WTC11 (cell line): ENCODE measurements at regions of chr10 and their contacts with region 1.

Region 1: DNA sequence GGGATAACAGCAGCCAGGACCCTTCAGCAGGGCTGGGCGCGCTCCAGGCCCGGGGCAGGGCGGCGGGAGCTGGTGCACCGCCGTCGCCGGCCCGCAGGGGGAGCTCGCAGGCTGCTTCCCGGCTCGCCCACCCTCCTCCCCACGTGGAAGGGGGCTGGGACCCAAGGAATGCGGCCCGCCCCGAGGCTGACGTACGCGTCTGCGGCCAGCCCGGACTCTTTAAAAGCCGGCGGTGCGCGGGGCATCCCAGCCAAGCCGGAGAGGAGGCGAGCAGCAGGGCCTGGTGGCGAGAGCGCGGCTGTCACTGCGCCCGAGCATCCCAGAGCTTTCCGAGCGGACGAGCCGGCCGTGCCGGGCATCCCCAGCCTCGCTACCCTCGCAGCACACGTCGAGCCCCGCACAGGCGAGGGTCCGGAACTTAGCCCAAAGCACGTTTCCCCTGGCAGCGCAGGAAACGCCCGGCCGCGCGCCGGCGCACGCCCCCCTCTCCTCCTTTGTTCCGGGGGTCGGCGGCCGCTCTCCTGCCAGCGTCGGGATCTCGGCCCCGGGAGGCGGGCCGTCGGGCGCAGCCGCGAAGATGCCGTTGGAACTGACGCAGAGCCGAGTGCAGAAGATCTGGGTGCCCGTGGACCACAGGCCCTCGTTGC is at the start of gene PFKFB3:
- DNase-seq: peak; percentile 97
- ATAC-seq: peak; percentile 80
- H3K4me3 Mint-ChIP-seq: peak within 1 kb of the TSS; percentile 97
- H3K27ac Mint-ChIP-seq: peak within 1 kb of the TSS; percentile 94
- H3K4me1 Mint-ChIP-seq: peaks cover 21% of the 10 kb centered on the region
- H3K27me3 Mint-ChIP-seq: peaks cover 53% of the 10 kb centered on the region
- CTCF ChIP-seq: peak; percentile 94
- total RNA-seq, gene PFKFB3: 30.6 to 42.5 TPM (median 40.7 TPM) in 3 replicates

Region 2: DNA sequence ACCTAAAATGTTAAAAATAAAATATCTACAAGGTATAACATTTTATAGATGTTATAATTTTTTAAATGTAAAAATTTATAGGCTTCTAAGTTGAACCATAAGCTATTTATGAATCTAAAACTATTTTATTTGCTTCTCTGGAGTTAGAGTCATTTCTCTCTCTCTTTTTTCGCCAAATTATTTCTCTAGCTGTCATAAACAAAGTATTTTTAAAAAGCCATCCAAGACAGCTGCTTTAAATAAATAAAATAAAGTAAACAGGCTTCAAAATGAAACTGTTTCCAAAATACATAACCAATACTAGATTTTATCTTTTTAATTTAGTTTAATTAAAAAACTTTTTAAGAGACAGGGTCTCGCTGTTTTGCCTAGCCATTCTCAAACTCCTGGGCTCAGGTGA is 213.1 kb before region 1 on chr10:
- CTCF ChIA-PET with region 1: no interaction called
- POLR2A ChIA-PET with region 1: no interaction called
- DNase-seq: no peak
- ATAC-seq: no peak
- H3K4me3 Mint-ChIP-seq: no peak overlapping the region
- H3K27ac Mint-ChIP-seq: no peak overlapping the region
- H3K4me1 Mint-ChIP-seq: no peaks in the 10 kb centered on the region
- H3K27me3 Mint-ChIP-seq: peaks cover 5% of the 10 kb centered on the region
- CTCF ChIP-seq: no peak

Region 3: DNA sequence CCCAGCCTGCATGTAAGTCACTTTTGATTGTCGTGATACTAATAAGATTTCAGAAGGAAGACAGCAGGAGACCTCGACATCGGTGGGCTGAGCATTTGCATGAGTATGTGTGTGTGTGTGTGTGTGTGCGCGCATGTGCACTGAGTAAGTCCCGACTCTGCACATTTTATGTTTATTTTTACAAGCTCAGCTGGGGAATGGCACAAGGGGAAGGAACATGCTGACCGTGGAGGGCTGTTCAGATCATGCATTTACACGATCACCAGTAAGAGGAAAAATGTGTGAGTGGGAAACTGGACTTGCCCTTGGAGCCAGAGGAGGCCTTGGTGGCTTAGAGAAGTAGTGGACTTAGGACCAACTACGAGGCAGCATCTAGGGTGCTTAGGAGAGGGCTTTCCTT is 182.0 kb before region 1 on chr10:
- CTCF ChIA-PET with region 1: no interaction called
- POLR2A ChIA-PET with region 1: no interaction called
- DNase-seq: no peak
- ATAC-seq: no peak
- H3K4me3 Mint-ChIP-seq: no peak overlapping the region
- H3K27ac Mint-ChIP-seq: no peak overlapping the region
- H3K4me1 Mint-ChIP-seq: no peaks in the 10 kb centered on the region
- H3K27me3 Mint-ChIP-seq: no peaks in the 10 kb centered on the region; the same call in 1 of the 2 replicates
- CTCF ChIP-seq: no peak

Region 4: GRCh38 chr10:6086375-6087233 is 116.2 kb before region 1 on chr10:
- CTCF ChIA-PET with region 1: interaction called, 19 read pairs
- POLR2A ChIA-PET with region 1: no interaction called
- DNase-seq: peak; percentile 92
- ATAC-seq: peak; percentile 68
- H3K4me3 Mint-ChIP-seq: no peak overlapping the region
- H3K27ac Mint-ChIP-seq: peak overlapping the region; percentile 76; the same call in 1 of the 2 replicates
- H3K4me1 Mint-ChIP-seq: peaks cover 38% of the 10 kb centered on the region
- H3K27me3 Mint-ChIP-seq: no peaks in the 10 kb centered on the region; the same call in 1 of the 2 replicates
- CTCF ChIP-seq: peak; percentile 55

Region 5: DNA sequence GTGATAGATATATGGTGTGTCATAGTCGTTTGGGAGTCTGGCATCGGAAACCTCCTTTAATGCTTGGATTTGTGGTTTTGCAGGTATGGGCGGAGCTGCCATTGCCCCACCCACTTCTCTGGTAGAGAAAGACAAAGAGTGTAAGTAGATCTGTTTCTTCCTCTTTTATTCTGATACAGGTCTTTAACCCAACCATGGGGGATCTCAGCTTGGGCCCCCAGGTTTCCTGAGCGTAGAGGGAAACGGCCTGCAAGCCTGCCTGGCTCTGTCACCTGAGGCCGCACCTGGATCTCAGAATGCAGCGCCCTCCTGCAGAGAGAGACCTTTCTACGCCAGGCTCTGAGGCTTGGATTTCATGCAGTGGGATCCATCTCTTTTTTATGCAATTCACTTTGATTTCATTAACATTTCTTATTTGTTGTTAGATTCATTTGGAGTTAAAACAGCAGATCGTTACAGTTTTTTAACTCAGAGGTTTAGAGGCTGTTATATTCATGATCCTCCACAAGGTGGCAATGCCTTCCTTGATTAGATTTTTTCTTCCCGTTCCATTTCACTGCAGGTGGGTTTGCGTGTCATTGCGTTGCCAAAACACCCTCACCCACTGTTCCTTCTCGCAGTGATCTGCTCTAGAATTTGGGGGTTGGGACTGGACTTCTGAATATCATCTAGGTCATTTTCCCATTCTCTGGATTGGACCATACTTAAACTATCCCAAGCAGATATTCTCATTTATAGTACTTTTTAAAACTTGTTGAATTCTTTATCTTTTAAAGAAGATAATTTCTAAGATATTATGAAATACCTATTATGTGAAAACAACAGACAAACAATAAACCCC is 94.0 kb before region 1 on chr10:
- CTCF ChIA-PET with region 1: interaction called, 17 read pairs
- POLR2A ChIA-PET with region 1: interaction called, 5 read pairs
- DNase-seq: peak; percentile 84
- ATAC-seq: peak; percentile 97
- H3K4me3 Mint-ChIP-seq: peak overlapping the region; percentile 43
- H3K27ac Mint-ChIP-seq: peak overlapping the region; percentile 97
- H3K4me1 Mint-ChIP-seq: peaks cover 43% of the 10 kb centered on the region
- H3K27me3 Mint-ChIP-seq: no peaks in the 10 kb centered on the region
- CTCF ChIP-seq: peak; percentile 70

Region 6: DNA sequence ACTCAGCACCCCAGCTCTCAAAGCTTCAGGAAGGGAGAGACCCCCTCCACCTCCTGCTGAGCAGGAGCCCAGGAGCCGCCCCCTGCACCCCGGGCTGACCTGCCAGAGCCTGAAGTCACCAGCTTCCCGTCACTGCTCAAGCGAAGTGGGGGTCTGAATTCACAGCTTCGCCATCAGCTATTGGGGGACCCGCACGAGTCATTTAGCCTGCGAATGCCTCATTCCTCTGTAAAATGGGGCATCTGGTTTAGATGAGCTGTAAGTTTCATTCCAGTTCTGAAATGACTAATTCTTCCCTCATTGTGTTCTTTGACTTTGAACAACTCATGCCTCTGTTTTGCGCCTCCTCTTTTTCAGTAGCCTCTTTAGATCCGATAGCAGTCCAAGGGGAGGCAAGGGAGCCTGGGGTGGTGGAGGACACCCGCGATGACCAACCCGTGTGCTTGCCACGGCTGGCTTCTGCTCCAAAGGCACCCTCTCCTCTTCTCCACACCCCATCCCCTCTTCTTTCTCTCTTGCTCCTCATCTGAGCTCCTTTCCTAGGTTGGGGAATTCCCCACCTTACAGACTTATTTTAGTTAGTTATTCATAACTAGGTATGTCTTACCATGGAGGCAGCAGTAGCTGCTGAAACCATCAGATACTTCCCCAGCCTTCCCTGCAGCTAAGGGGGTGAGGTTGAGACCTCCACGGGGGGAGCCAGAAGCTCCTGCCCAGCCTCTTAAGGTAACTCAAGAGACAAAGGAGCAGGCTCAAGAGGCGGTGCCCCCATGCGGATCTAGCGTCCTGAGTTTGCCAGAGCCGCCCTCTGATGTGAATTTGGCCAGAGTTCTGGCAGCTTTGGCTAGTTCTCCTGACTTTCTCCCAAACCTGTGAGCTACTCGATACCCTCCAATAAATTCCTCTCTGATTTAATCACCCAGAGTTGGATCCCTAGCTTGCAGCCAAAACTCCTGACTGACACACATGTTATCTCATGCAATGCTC is 66.3 kb before region 1 on chr10:
- CTCF ChIA-PET with region 1: interaction called, 10 read pairs
- POLR2A ChIA-PET with region 1: interaction called, 6 read pairs
- DNase-seq: no peak
- ATAC-seq: no peak
- H3K4me3 Mint-ChIP-seq: no peak overlapping the region
- H3K27ac Mint-ChIP-seq: no peak overlapping the region
- H3K4me1 Mint-ChIP-seq: peaks cover 32% of the 10 kb centered on the region
- H3K27me3 Mint-ChIP-seq: peaks cover 9% of the 10 kb centered on the region
- CTCF ChIP-seq: no peak

Region 7: GRCh38 chr10:6171881-6172695 is 30.7 kb before region 1 on chr10:
- CTCF ChIA-PET with region 1: interaction called, 11 read pairs
- POLR2A ChIA-PET with region 1: interaction called, 5 read pairs
- DNase-seq: no peak
- ATAC-seq: no peak
- H3K4me3 Mint-ChIP-seq: no peak overlapping the region
- H3K27ac Mint-ChIP-seq: peak overlapping the region; percentile 66; the same call in 1 of the 2 replicates
- H3K4me1 Mint-ChIP-seq: peaks cover 36% of the 10 kb centered on the region
- H3K27me3 Mint-ChIP-seq: no peaks in the 10 kb centered on the region
- CTCF ChIP-seq: no peak

Region 8: DNA sequence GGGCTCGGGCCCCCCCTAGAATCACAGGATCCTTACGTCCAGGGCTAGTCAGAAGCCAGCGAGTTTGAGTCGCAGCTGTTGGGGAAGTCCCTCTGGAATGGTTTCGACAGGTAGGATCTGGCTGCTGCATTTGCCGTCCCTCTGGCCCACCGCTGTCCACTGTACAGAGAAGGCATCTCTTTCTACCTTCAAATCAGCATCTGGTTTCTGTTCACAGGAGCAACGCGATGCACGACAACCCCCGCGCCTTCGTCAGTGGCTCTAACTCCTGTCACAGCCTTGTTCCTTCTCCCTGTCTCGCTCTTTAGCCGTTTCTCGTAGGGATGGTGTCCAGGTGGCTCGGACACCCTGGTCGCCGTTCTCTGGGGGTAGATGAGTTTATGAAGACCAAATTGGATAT is 11.2 kb before region 1 on chr10:
- CTCF ChIA-PET with region 1: interaction called, 12 read pairs
- POLR2A ChIA-PET with region 1: interaction called, 4 read pairs
- DNase-seq: no peak
- ATAC-seq: no peak
- H3K4me3 Mint-ChIP-seq: no peak overlapping the region
- H3K27ac Mint-ChIP-seq: no peak overlapping the region; the same call in 1 of the 2 replicates
- H3K4me1 Mint-ChIP-seq: peaks cover 4% of the 10 kb centered on the region; the same call in 1 of the 2 replicates
- H3K27me3 Mint-ChIP-seq: no peaks in the 10 kb centered on the region
- CTCF ChIP-seq: no peak

Region 9: GRCh38 chr10:6409971-6410651 is 207.3 kb after region 1 on chr10:
- CTCF ChIA-PET with region 1: interaction called, 14 read pairs
- POLR2A ChIA-PET with region 1: interaction called, 4 read pairs
- DNase-seq: no peak
- ATAC-seq: peak; percentile 59
- H3K4me3 Mint-ChIP-seq: no peak overlapping the region
- H3K27ac Mint-ChIP-seq: peak overlapping the region; percentile 37; the same call in 1 of the 2 replicates
- H3K4me1 Mint-ChIP-seq: peaks cover 12% of the 10 kb centered on the region
- H3K27me3 Mint-ChIP-seq: peaks cover 3% of the 10 kb centered on the region; the same call in 1 of the 2 replicates
- CTCF ChIP-seq: no peak